Dendritic cell treated with granulocyte-macrophage colony-stimulating factor and Interleukin-4, amounts not matched to agents 40 ng/mL and 50 ng/mL, for 4 days (primary cell): ENCODE measurements at regions of chr9 and their contacts with region 1.

Region 1: GRCh38 chr9:34899535-34900158 is 58.4 kb upstream of the PHF24 start:
- H3K4me3 Mint-ChIP-seq: no peak overlapping the region
- H3K27ac Mint-ChIP-seq: no peak overlapping the region
- H3K4me1 Mint-ChIP-seq: no peaks in the 10 kb centered on the region
- H3K27me3 Mint-ChIP-seq: peaks cover 23% of the 10 kb centered on the region

Region 2: DNA sequence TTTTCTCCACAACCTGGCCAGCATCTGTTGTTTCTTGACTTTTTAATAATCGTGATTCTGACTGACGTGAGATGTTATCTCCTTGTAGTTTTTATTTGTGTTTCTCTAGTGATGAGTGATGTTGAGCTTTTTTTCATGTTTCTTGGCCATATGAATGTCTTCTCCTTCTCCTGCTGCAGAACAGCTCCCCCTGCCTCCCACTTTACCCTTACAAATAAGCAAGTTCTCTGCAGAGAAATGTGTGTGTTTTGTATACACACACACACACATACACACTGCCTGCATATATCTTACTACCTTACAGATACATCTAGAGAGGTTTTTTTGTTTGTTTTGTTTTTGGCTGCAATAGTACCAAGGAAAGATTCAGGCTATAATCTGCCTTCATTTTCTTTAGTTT is 30.3 kb before region 1 on chr9:
- intact Hi-C with region 1: no loop called
- H3K4me3 Mint-ChIP-seq: no peak overlapping the region
- H3K27ac Mint-ChIP-seq: no peak overlapping the region
- H3K4me1 Mint-ChIP-seq: no peaks in the 10 kb centered on the region
- H3K27me3 Mint-ChIP-seq: peaks cover 4% of the 10 kb centered on the region

Region 3: GRCh38 chr9:34989003-34989945 is 89.6 kb after region 1 on chr9 and contains the start of gene DNAJB5:
- intact Hi-C with region 1: loop called (anchors 1 kb)
- H3K4me3 Mint-ChIP-seq: peak within 1 kb of the TSS; percentile 76
- H3K27ac Mint-ChIP-seq: peak within 1 kb of the TSS; percentile 83
- H3K4me1 Mint-ChIP-seq: peaks cover 86% of the 10 kb centered on the region
- H3K27me3 Mint-ChIP-seq: peaks cover 3% of the 10 kb centered on the region

Region 4: DNA sequence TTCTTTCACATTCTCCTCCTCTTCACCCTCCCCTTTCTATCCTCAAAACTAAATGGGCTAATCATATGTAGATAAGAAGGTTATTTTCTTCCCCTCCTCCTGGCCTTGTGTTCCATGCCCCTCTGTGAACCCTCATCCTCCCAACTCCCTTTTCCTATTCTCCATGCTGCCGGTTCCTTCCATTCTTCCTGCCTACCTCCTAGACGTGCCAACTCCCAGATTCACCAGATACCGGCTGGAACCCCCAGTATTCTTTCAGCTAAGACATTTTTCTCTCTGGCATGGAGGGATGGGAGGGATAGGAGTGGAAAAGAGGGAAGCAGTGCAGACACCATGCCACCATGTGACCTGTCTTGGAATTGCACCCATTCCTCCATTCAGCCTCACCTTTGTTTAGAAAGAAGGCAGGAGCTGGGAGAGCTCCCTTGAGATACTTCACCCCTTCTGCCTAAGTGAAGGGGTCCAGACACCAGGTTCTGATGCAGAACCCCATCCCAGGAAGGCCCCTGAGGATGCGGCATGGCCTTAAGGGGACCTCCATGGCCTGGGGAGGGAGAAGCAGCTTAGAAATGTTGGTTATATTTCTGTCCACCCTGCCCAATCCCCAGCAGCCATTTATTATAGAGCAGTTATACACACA is 94.7 kb after region 1 on chr9:
- intact Hi-C with region 1: loop called (anchors 2 kb)
- H3K4me3 Mint-ChIP-seq: no peak overlapping the region
- H3K27ac Mint-ChIP-seq: peak overlapping the region; percentile 61
- H3K4me1 Mint-ChIP-seq: peaks cover 59% of the 10 kb centered on the region
- H3K27me3 Mint-ChIP-seq: peaks cover 3% of the 10 kb centered on the region

Region 5: GRCh38 chr9:35051069-35051967 is 151.7 kb after region 1 on chr9:
- intact Hi-C with region 1: loop called (anchors 5 kb)
- H3K4me3 Mint-ChIP-seq: no peak overlapping the region
- H3K27ac Mint-ChIP-seq: no peak overlapping the region
- H3K4me1 Mint-ChIP-seq: peaks cover 10% of the 10 kb centered on the region
- H3K27me3 Mint-ChIP-seq: no peaks in the 10 kb centered on the region

Region 6: DNA sequence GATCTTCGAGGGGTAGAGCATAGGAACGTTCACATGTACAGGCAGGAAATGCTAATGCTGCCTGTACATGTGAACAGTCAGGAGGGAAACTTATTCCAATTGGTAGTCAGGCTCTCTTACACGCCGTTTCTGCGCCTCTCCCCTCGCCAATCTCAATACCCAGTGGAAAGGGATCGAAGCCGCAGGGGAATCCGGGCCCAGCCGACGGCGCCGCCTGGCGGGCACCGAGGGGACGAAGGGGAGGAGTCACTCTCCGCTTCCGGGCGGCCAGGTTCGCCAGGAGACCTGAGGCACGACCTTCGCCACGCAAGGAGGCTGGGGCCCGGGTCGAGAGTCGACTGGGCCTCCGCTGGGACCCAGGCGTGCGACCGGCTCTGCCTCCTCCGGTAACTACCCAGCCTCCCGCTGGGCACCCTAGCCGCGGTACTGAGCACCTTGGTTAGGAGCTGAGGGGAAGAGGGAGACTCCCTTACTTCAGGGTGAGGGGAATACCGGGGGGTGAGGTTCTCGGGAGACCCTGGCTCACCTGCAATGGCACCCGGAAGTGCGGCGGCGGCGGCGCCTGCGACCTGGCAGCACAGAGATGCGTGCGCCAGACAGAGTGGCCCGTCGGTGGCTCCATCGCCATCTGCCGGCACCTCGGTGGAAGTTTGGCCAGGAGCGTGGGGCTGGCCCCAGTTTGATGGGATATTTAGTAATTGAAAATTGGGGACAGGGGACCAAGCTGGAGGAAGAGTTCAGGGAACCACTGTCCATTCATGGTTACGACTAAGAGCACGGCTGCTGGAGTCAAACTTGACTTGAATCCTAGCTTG is 196.6 kb after region 1 on chr9 and contains the start of gene PIGO:
- intact Hi-C with region 1: loop called (anchors 1 kb)
- H3K4me3 Mint-ChIP-seq: peak within 1 kb of the TSS; percentile 78
- H3K27ac Mint-ChIP-seq: peak within 1 kb of the TSS; percentile 92
- H3K4me1 Mint-ChIP-seq: peaks cover 33% of the 10 kb centered on the region
- H3K27me3 Mint-ChIP-seq: no peaks in the 10 kb centered on the region

Region 7: DNA sequence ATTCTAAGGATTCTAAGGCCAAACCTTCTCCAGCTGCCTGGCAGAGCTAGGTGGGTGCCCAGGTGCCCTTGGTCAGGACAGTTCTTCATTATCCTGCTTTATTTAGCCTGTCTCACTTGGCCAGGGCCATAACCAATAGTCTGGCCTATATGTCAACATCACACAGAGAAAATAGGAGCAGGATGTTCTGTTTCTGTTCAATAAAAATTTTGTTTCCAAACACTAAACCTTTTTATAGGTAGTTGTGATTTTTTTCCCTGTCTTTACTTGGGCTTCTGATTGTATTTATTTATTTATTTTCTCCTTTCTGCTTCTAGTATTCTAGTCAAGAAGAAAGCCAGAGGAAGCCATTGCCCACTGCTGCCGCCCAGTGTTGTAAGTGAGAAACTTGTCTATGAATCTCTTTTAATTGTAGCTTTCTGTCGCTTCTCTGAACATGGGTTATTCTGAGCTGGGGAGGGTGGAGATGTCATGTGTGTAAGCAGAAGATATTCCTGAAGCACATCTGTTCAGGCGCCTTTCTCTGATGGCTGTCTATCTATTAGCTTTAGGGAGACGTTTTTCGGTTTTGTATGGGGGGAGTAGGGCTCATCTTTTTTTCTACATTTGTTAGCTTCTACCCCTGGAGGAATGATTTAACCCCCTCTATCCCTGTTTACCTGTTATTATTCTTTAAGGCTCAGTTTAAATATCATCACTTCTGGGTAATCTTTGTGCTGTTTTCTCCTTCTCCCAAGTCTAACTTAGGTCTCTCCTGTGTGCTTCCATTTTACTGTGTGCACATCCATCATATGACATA is 359.2 kb after region 1 on chr9:
- intact Hi-C with region 1: loop called (anchors 5 kb)
- H3K4me3 Mint-ChIP-seq: no peak overlapping the region
- H3K27ac Mint-ChIP-seq: no peak overlapping the region
- H3K4me1 Mint-ChIP-seq: peaks cover 5% of the 10 kb centered on the region
- H3K27me3 Mint-ChIP-seq: no peaks in the 10 kb centered on the region

Region 8: DNA sequence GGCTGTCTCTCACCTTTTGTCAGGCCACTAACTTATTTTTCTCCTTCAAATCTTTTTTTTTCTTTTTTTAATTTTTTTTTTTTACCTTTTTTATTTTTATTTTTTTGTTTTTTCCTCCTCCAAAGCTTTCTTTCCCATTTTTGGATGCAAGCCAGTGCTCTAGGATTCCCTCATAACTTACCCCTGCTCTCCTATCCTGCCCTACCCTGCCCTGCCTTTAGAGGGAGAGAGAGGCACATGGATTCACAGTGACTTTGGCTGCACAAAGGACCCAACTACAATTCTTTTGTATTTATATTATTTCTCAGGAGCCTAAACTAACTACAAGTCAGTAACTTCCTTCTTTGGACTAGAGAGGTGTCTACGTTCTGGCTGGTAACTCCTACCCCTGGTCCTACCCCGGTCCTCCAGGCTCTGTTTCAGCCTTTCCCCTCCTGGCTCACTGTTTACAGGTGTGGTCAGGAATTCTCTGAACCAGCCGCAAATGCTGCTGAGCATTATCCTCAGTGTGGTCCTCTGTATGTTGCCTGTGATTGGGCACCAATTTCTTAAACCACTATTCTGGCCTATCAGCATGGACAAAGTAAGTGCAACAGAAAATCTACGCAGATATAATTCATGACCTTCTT is 581.8 kb after region 1 on chr9:
- intact Hi-C with region 1: loop called (anchors 1 kb)
- H3K4me3 Mint-ChIP-seq: no peak overlapping the region
- H3K27ac Mint-ChIP-seq: no peak overlapping the region
- H3K4me1 Mint-ChIP-seq: no peaks in the 10 kb centered on the region
- H3K27me3 Mint-ChIP-seq: peaks cover 3% of the 10 kb centered on the region